Mucosa of descending colon (tissue), 3 donors: ENCODE measurements at regions of chr9 and their contacts with region 1.

Region 1: DNA sequence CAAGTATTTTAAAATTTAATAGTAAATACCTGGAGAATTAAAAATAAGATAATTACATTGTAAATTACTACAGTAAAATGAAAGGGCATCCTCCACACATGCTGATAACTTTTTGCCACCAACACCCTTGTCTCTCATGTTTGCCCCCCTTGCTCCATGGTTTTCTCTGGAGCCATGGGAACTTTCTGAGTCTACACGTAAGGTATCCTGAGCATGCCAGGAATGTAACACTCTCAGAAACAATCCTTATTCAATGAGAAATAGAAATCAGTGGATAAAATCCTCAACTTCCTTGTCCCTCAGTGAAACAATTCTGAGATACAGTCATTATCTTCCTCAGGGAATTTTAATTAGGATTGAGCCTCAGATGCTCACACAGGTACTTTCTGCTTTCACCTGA is 108.9 kb downstream of the IZUMO3 start:
- DNase-seq: no peak
- ATAC-seq: no peak
- H3K4me3 ChIP-seq: no peak overlapping the region
- H3K4me1 ChIP-seq: no peaks in the 10 kb centered on the region
- CTCF ChIP-seq: no peak

Region 2: DNA sequence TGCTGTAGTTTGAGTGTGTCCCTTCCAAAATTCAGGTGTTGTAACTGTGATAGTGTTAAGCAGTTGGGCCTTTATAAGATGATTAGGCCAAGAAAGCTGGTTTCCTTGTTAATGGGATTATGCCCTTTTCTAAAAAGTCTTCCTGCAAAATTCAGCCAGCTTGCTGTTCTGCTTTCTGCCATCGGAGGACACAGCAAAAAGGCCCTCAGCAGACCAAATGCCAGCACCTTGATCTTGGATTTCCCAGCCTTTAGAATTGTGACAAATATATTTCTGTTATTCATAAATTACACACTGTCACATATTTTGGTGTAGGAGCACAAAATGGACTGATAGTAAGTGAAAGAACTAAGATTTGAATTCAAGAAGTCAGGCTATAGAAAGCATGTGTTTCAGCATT is 94.3 kb before region 1 on chr9:
- intact Hi-C with region 1: loop called in 1 of 2 experiments (anchors 10 kb)
- DNase-seq: no peak
- ATAC-seq: no peak
- H3K4me3 ChIP-seq: no peak overlapping the region
- H3K4me1 ChIP-seq: no peaks in the 10 kb centered on the region
- CTCF ChIP-seq: no peak